ENCODE measurements at regions of chr15 and their contacts with region 1.

Region 1: GRCh38 chr15:95009635-95010034 is 778.3 kb downstream of the MCTP2 start:
- DNase-seq: no peak
- H3K4me3 ChIP-seq: no peak overlapping the region
- H3K4me3 Mint-ChIP-seq: no peak overlapping the region
- H3K27ac Mint-ChIP-seq: no peak overlapping the region
- H3K4me1 ChIP-seq: no peaks in the 10 kb centered on the region
- H3K4me1 Mint-ChIP-seq: no peaks in the 10 kb centered on the region
- H3K27me3 ChIP-seq: no peaks in the 10 kb centered on the region
- H3K27me3 Mint-ChIP-seq: no peaks in the 10 kb centered on the region
- CTCF ChIP-seq: no peak

Region 2: GRCh38 chr15:94893091-94893490 is 116.5 kb before region 1 on chr15:
- CTCF ChIA-PET with region 1: no interaction called
- POLR2A ChIA-PET with region 1: no interaction called
- intact Hi-C with region 1: no loop called
- DNase-seq: no peak
- H3K4me3 ChIP-seq: no peak overlapping the region
- H3K4me3 Mint-ChIP-seq: no peak overlapping the region
- H3K27ac Mint-ChIP-seq: no peak overlapping the region
- H3K4me1 ChIP-seq: no peaks in the 10 kb centered on the region
- H3K4me1 Mint-ChIP-seq: no peaks in the 10 kb centered on the region
- H3K27me3 ChIP-seq: no peaks in the 10 kb centered on the region
- H3K27me3 Mint-ChIP-seq: no peaks in the 10 kb centered on the region
- CTCF ChIP-seq: no peak

Region 3: DNA sequence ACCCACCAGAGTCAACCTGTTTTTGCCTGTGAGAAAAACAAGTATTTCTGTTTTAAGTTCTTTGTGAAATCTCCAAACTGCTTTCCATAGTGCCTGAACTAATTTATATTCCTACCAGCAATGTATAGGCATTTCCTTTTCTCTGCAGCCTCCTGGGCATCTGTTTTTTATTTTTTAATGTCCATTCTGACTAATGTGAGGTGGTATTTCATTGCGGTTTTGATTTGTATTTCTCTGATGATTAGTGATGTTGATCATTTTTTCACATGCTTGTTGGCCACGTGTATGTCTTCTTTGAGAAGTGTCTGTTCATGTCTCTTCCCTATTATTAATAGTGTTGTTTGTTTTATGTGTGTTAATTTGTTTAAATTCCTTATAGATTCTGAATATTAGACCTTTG is 42.2 kb after region 1 on chr15:
- CTCF ChIA-PET with region 1: no interaction called
- POLR2A ChIA-PET with region 1: no interaction called
- intact Hi-C with region 1: no loop called
- DNase-seq: no peak
- H3K4me3 ChIP-seq: no peak overlapping the region
- H3K4me3 Mint-ChIP-seq: no peak overlapping the region
- H3K27ac Mint-ChIP-seq: no peak overlapping the region
- H3K4me1 ChIP-seq: no peaks in the 10 kb centered on the region
- H3K4me1 Mint-ChIP-seq: no peaks in the 10 kb centered on the region
- H3K27me3 ChIP-seq: no peaks in the 10 kb centered on the region
- H3K27me3 Mint-ChIP-seq: no peaks in the 10 kb centered on the region
- CTCF ChIP-seq: no peak

Region 4: DNA sequence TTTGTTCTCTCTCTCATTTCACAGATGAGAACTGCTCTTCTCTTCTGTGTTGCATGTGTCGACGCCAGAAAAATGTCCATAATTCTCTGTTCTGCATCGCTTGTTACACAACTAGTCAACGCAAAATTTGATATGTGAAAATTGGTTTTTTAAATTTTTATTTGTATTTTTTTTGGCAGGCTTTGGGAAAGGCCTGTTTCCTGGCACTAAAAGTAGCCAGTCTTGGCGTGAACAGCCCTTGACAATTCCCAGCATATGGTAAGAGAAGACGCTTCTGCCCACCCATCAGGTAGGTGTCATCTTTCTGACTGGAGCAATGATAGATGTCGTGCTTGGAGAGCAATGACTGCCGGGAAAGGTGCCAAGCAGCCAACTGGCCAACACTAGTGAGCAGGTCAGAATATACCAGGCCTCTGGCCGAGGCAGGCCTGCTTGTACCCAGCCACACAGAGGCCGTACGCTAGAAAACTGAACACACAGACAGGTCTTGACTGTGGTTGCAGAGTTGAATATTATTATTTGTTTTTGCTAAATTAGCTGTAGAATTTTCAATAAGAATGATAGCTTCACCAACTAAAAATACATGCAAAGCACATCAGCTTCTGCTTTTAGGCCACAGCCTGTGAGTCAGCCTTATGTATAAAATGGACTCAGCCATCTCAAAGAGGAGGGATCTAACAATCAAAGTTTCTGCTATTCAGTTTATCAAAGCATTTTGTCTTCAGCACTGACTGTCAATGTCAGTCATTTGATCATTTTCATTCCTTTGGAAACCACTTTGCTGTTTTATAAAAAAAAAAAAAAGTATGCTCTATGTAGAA is 59.3 kb after region 1 on chr15:
- CTCF ChIA-PET with region 1: no interaction called
- POLR2A ChIA-PET with region 1: no interaction called
- intact Hi-C with region 1: loop called (anchors 10 kb)
- DNase-seq: no peak
- H3K4me3 ChIP-seq: no peak overlapping the region
- H3K4me3 Mint-ChIP-seq: no peak overlapping the region
- H3K27ac Mint-ChIP-seq: no peak overlapping the region
- H3K4me1 ChIP-seq: no peaks in the 10 kb centered on the region
- H3K4me1 Mint-ChIP-seq: no peaks in the 10 kb centered on the region
- H3K27me3 ChIP-seq: no peaks in the 10 kb centered on the region
- H3K27me3 Mint-ChIP-seq: no peaks in the 10 kb centered on the region
- CTCF ChIP-seq: no peak

Measured in Caco-2 (cell line).